ENCODE measurements at regions of chr2 and their contacts with region 1.

Region 1: DNA sequence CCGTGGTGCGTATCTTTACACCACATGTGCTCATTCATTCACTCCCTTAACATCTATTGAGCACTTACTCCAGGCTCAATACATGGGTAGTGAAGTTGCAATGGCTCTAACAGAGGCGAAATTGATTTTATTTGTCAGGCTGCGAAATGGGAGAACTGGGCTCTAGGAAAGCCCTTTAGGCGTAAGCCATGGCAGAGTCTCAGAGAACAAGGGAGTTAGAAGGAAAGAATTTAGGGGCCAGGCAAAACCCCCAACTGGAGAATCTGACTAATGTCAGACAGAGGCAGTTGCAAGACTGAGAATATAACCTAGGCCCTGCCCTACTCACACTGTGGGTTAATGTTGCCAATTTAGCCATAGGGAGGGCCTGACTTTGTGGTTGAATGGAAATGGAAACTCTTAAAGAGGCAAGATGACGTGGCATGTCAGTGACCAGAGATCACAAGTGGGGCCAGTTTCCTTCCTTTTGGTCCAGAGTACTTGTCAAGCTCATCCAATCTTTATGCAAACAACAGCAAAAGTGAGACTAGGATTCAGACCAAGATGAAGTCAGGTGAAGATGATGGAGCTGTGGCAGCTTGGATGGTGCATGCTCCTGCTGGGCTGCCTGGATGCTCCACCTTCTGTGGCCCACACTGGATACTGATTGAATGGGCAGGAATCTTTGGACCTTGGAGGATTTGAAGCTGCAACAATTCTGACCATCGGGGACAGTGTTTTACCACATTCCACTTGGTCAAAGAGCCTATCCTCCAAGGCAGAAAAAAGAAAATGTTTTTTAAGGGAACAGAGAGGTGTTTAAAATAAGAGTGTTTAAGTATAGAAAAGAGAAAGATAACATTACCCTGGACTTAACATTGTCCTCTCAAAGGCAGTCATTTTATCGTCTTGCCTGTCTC is 92.2 kb downstream of the CAPN13 start:
- DNase-seq: no peak
- H3K4me3 ChIP-seq: no peak overlapping the region
- H3K27ac ChIP-seq: no peak overlapping the region
- H3K4me1 ChIP-seq: no peaks in the 10 kb centered on the region
- H3K27me3 ChIP-seq: no peaks in the 10 kb centered on the region
- CTCF ChIP-seq: no peak
- POLR2A ChIP-seq: no peak

Region 2: DNA sequence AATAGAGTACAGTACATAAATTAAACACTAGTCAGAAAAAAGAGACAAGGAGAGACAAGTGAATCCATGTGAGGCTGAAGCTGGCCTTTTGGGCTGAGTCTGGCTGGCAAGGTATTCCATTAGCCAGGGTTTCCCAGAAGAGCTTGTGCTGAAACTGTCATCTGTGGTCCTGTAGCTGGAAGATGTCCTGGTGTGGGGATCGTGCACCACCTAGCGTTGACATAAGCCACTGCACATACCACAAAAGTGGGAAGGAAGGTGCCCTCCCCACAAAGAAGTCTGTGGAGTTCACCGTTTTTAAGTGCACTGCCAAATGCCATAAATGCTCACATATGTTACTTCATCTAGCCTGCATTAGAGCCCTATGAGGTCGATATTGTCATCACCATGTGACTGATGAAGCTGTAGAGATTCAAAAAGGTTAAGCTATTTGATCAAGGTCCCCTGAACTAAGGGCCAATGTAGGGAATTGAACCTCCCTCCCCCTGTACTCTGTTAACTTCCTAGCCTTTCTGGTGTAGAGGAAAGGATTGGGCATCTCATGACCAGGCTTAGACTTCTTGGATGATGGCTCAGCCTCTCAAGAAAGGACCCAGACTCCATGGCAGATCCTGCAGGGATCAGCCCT is 455.1 kb after region 1 on chr2:
- intact Hi-C with region 1: loop called (anchors 5 kb)
- DNase-seq: peak; percentile 17 to 28
- H3K4me3 ChIP-seq: no peak overlapping the region
- H3K27ac ChIP-seq: no peak overlapping the region
- H3K4me1 ChIP-seq: no peaks in the 10 kb centered on the region
- H3K27me3 ChIP-seq: no peaks in the 10 kb centered on the region
- CTCF ChIP-seq: peak; percentile 65 to 82 (median 76)
- POLR2A ChIP-seq: no peak

Measured in uterus (tissue), 4 donors.